A549 (cell line): ENCODE measurements at regions of chr19 and their contacts with region 1.

Region 1: GRCh38 chr19:44689056-44689895 is 9.7 kb upstream of the CEACAM16 start:
- DNase-seq: peak; percentile 66 to 95
- ATAC-seq: peak; percentile 59 to 72
- H3K4me3 ChIP-seq: no peak overlapping the region
- H3K27ac ChIP-seq: peak overlapping the region; percentile 87 to 92
- H3K4me1 ChIP-seq: peaks cover 84% of the 10 kb centered on the region
- CTCF ChIP-seq: peak; percentile 99
- EP300 ChIP-seq: no peak
- POLR2A ChIP-seq: no peak
- RAD21 ChIP-seq: peak; percentile 99 to 100

Region 2: GRCh38 chr19:44570984-44571684 is 118.1 kb before region 1 on chr19:
- CTCF ChIA-PET with region 1: interaction called, 19 read pairs
- POLR2A ChIA-PET with region 1: no interaction called
- DNase-seq: peak; percentile 82 to 86
- ATAC-seq: peak; percentile 87 to 95
- H3K4me3 ChIP-seq: no peak overlapping the region
- H3K27ac ChIP-seq: peak overlapping the region in 1 of 2 experiments; percentile 57; a peak in 2 of 6 replicates
- H3K4me1 ChIP-seq: peaks cover 8% of the 10 kb centered on the region
- CTCF ChIP-seq: peak; percentile 98
- EP300 ChIP-seq: no peak
- POLR2A ChIP-seq: no peak
- RAD21 ChIP-seq: peak; percentile 95 to 96

Region 3: GRCh38 chr19:44653977-44654774 is 35.1 kb before region 1 on chr19:
- CTCF ChIA-PET with region 1: interaction called, 180 read pairs
- POLR2A ChIA-PET with region 1: interaction called, 6 read pairs
- DNase-seq: peak; percentile 87 to 88
- ATAC-seq: peak; percentile 80 to 85
- H3K4me3 ChIP-seq: no peak overlapping the region
- H3K27ac ChIP-seq: peak overlapping the region; percentile 34 to 77; a peak in 5 of 6 replicates
- H3K4me1 ChIP-seq: peaks cover 31% of the 10 kb centered on the region
- CTCF ChIP-seq: peak; percentile 93
- EP300 ChIP-seq: no peak
- POLR2A ChIP-seq: no peak
- RAD21 ChIP-seq: peak; percentile 92 to 94

Region 4: GRCh38 chr19:44723952-44724319 is 34.7 kb after region 1 on chr19:
- CTCF ChIA-PET with region 1: interaction called, 694 read pairs
- POLR2A ChIA-PET with region 1: interaction called, 27 read pairs
- DNase-seq: peak; percentile 96
- ATAC-seq: peak; percentile 77 to 83
- H3K4me3 ChIP-seq: peak overlapping the region; percentile 38
- H3K27ac ChIP-seq: peak overlapping the region; percentile 97
- H3K4me1 ChIP-seq: peaks cover 87% of the 10 kb centered on the region
- CTCF ChIP-seq: peak; percentile 99
- EP300 ChIP-seq: no peak
- POLR2A ChIP-seq: peak; percentile 40; the same call in 1 of the 2 replicates
- RAD21 ChIP-seq: peak; percentile 100

Region 5: DNA sequence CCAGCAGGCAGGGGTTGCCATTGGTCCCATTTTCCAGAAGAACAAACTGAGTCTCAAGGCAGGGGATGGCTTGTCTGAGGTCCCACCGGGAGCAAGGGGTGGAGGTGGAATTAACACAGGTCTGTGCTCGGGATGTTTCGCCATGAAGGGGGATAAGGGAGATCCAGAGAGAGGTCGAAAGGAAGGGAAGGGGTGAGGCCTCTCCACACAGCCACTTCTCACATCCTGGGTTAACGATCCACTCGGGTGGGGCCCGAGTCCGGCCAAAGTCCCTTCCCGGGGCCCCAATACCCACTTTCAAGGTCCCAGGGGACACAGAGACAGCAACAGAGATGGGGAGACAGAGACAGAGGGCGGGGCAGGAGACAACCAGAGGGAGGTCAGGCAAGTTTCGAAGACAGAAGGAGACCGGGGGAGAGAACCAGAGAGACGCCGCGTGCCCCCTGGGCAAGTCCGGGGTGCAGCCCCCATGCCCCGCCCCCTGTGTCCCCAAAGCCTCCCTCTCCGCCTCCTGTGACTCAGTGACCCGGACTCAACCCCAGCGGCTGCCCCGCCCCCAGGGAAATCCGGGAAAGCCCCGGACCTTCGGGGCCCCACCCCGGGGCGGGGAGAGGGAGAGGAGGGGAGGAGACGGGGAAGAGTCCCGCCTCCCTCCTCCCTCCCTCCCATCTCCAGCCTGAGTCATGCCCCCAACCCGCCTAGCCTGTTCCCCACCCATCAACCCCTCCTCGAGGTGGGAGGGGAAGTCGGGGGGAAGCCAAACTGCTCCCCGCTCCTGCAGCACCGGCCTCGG is 57.9 kb after region 1 on chr19:
- CTCF ChIA-PET with region 1: interaction called, 26 read pairs
- POLR2A ChIA-PET with region 1: interaction called, 11 read pairs
- DNase-seq: peak; percentile 92 to 98
- ATAC-seq: peak; percentile 55 to 71
- H3K4me3 ChIP-seq: peak overlapping the region; percentile 95
- H3K27ac ChIP-seq: peak overlapping the region; percentile 92 to 99
- H3K4me1 ChIP-seq: peaks cover 75% of the 10 kb centered on the region
- CTCF ChIP-seq: no peak
- EP300 ChIP-seq: peak; percentile 51 to 81; a peak in 3 of 5 replicates
- POLR2A ChIP-seq: peak; percentile 62
- RAD21 ChIP-seq: peak in 1 of 2 experiments; percentile 26; a peak in 3 of 5 replicates

Region 6: DNA sequence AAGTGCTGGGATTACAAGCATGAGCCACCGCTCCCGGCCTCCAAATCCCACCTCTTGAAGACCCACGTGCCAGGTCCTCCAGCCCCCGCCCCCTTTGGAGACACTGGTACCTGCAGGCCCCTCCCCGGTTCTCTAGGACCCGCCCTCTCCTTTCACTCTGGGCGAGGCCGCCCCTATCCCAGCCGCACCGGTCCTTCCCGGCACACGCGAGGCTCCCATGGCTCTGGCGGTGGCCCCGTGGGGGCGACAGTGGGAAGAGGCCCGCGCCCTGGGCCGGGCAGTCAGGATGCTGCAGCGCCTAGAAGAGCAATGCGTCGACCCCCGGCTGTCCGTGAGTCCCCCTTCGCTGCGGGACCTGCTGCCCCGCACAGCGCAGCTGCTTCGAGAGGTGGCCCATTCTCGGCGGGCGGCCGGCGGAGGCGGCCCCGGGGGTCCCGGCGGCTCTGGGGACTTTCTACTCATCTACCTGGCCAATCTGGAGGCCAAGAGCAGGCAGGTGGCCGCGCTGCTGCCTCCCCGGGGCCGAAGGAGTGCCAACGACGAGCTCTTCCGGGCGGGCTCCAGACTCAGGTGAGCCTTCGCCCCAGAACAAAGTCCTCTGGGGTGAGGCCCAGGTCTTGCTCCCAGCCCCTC is 88.6 kb after region 1 on chr19 and contains the start of gene CBLC:
- CTCF ChIA-PET with region 1: interaction called, 320 read pairs
- POLR2A ChIA-PET with region 1: no interaction called
- DNase-seq: peak in 1 of 2 experiments; percentile 60
- ATAC-seq: peak; percentile 19 to 59; a peak in 4 of 6 replicates
- H3K4me3 ChIP-seq: no peak within 1 kb of the TSS
- H3K27ac ChIP-seq: peak within 1 kb of the TSS in 1 of 2 experiments; percentile 88; a peak in 3 of 6 replicates
- H3K4me1 ChIP-seq: peaks cover 33% of the 10 kb centered on the region
- CTCF ChIP-seq: no peak
- EP300 ChIP-seq: no peak
- POLR2A ChIP-seq: no peak
- RAD21 ChIP-seq: no peak
- polyA plus RNA-seq, gene CBLC: not detected in 2 replicates

Region 7: DNA sequence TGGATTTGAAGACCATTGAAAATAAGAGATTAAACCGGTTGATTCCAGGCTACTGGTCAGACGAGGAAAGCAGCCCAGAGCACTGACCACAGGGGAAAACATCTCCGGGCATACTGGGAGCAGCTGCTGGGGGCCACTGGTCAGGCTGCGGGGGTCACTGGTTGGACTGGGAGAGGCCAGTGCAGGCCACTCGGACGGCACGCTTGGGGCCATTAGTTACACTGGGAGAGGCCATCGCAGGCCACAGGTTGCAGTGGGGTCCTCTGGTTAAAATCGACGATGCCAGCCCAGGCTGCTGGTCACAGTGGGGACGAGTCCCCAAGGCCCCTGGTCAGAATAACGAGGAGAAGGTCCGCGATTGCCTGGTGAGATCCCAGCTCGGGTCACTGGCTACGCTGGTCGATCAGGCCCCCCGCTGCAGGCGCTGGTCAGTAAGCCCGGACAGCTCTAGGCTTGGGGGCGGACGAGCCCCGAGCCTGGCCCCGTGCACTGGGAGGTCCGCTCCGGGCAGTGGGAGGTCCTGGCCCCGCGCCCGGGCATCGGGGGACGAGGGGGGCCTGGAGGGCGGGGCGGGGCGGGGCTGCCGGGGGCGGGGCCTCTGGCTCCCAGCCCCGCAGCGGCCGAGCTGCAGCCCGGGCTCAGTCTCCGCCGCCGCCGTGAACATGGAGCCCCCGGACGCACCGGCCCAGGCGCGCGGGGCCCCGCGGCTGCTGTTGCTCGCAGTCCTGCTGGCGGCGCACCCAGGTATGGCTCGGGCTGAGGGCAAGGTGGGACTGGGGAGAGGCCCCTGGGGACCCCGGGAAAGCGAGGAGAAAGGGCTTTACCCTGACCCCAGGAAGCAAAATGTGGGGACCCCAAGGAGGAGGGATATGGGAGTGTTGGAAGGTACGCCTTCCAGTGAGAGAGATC is 119.4 kb after region 1 on chr19 and contains the start of gene BCAM:
- CTCF ChIA-PET with region 1: interaction called, 29 read pairs
- POLR2A ChIA-PET with region 1: interaction called, 3 read pairs
- DNase-seq: peak; percentile 53 to 93
- ATAC-seq: peak; percentile 52 to 72
- H3K4me3 ChIP-seq: peak within 1 kb of the TSS; percentile 69
- H3K27ac ChIP-seq: peak within 1 kb of the TSS; percentile 88 to 89
- H3K4me1 ChIP-seq: peaks cover 35% of the 10 kb centered on the region
- CTCF ChIP-seq: no peak
- EP300 ChIP-seq: no peak
- POLR2A ChIP-seq: peak; percentile 76
- RAD21 ChIP-seq: no peak
- polyA plus RNA-seq, gene BCAM: 15.2 and 18.4 TPM in 2 replicates